ENCODE measurements at regions of chr3 and their contacts with region 1.

Region 1: DNA sequence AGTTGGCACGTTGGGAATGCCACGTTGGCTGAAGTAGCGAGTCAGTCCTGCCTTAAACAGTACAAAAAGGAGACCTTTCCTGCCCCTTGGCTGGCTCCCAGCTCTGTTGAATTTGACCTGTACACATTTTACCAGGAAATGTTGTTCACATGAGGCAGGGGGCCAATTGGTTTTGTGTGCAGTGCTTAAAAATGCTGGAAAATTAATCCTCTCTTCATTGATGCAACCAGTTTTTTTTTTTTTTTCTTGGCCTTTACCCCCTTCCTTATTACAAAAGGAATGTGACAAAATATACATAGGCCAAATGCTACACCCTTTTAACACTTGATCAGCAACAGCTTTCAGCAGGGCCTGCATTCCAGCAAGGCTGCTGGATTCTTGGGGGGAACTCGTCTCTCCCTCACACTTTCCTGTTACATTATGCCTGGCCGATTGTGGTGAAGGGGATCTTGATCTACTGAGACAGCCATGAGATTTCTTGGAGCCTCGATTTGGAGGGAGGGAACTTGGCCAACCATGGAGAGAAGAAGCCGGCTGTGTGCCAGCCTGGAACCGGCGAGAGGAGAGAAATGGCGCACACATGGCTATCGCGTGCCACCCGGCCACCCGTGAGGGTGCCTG is 93.1 kb downstream of the DNASE1L3 start:
- DNase-seq: no peak
- ATAC-seq: no peak
- H3K4me3 Mint-ChIP-seq: no peak overlapping the region
- H3K27ac Mint-ChIP-seq: no peak overlapping the region
- H3K4me1 Mint-ChIP-seq: peaks cover 26% of the 10 kb centered on the region
- H3K27me3 Mint-ChIP-seq: no peaks in the 10 kb centered on the region

Region 2: GRCh38 chr3:58167431-58168351 is 50.0 kb after region 1 on chr3:
- CTCF ChIA-PET with region 1: interaction called, 12 read pairs
- POLR2A ChIA-PET with region 1: no interaction called
- intact Hi-C with region 1: no loop called
- DNase-seq: peak; percentile 83
- ATAC-seq: peak; percentile 98
- H3K4me3 Mint-ChIP-seq: no peak overlapping the region
- H3K27ac Mint-ChIP-seq: no peak overlapping the region
- H3K4me1 Mint-ChIP-seq: no peaks in the 10 kb centered on the region
- H3K27me3 Mint-ChIP-seq: no peaks in the 10 kb centered on the region

Measured in activated CD4-positive, alpha-beta T cell treated with anti-CD3 and anti-CD28 coated beads for 36 hours (primary cell).